Mucosa of descending colon (tissue), 3 donors: ENCODE measurements at regions of chr10 and their contacts with region 1.

Region 1: DNA sequence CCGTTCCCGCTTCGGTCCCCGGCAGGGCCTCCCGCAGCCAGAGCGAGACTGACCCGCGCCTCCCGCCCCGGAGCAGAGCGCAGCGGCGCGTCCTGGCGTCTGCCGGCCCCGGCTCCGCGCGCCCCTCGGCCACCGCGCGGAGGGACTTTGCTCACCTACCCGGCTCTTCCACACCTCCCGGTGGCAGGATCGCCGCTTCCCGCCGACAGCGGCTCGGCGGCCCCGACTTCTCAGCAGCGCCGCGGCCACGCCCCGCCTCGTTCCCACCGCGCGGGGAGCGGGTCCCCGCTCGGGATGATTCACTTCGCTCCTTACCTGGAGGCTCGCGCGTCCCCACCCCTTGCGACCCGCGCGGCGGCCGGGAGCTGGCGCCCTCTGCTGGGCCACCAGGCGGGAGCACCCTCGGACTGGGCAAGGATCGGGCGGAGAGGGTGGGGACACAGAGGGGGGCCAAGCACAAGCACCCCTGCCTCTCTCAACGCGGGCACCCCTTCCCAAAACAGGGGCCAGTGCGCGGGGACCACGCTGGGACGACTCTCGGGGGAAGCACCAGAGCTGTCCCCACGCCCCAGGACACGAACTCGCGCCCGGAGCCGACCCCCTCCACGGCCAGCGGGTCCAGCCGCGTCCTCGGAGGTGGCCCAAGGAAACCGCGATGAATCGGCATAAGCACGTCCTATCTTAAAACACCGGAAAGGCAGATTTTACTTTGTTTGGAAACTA is 101.0 kb upstream of the SVIL start:
- DNase-seq: peak; percentile 89 to 96 (median 91)
- ATAC-seq: peak; percentile 89
- H3K4me3 ChIP-seq: peak overlapping the region; percentile 67
- H3K4me1 ChIP-seq: peaks cover 16% of the 10 kb centered on the region
- CTCF ChIP-seq: peak; percentile 93

Region 2: DNA sequence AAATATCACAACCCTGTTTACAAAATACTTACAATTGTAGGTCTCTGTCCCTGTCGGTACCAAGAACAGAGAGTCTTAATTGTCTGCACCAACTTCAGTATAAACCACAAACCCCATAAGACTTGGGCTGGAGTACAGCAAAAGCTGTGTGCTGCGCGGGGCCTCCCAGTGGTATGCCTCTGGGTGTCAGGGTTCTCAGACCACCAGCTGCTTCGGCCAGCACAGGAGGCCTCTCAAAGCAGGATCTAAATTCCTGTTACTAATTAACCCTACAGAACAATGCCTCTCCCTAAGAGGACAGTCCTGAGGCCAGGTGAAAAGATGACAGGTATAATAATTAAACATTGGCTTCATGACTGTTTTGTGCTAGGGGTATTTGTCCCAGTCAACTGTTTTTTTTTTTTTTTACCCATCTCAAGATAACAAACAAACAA is 100.0 kb before region 1 on chr10:
- intact Hi-C with region 1: loop called (anchors 10 kb)
- DNase-seq: peak in 2 of 3 donors; percentile 55 to 67
- ATAC-seq: peak; percentile 77
- H3K4me3 ChIP-seq: no peak overlapping the region
- H3K4me1 ChIP-seq: peaks cover 33% of the 10 kb centered on the region
- CTCF ChIP-seq: no peak

Region 3: GRCh38 chr10:29646238-29646902 is 89.4 kb before region 1 on chr10:
- intact Hi-C with region 1: loop called in 1 of 2 experiments (anchors 10 kb)
- DNase-seq: no peak
- ATAC-seq: peak; percentile 32
- H3K4me3 ChIP-seq: no peak overlapping the region
- H3K4me1 ChIP-seq: peaks cover 41% of the 10 kb centered on the region
- CTCF ChIP-seq: no peak

Region 4: GRCh38 chr10:29658984-29659965 is 76.5 kb before region 1 on chr10:
- intact Hi-C with region 1: no loop called
- DNase-seq: peak in 1 of 3 donors; percentile 35
- ATAC-seq: peak; percentile 99
- H3K4me3 ChIP-seq: no peak overlapping the region
- H3K4me1 ChIP-seq: no peaks in the 10 kb centered on the region
- CTCF ChIP-seq: no peak